A549 (cell line): ENCODE measurements at regions of chr1 and their contacts with region 1.

Region 1: GRCh38 chr1:234722904-234723720 is 113.1 kb upstream of the IRF2BP2 start:
- DNase-seq: peak; percentile 43 to 65
- ATAC-seq: peak; percentile 21 to 24
- H3K4me3 ChIP-seq: peak overlapping the region; percentile 20; the same call in 1 of the 3 replicates
- H3K27ac ChIP-seq: peak overlapping the region; percentile 86 to 87
- H3K4me1 ChIP-seq: peaks cover 62% of the 10 kb centered on the region
- CTCF ChIP-seq: no peak
- EP300 ChIP-seq: no peak; a peak in 1 of 5 replicates
- POLR2A ChIP-seq: no peak
- RAD21 ChIP-seq: no peak; a peak in 1 of 5 replicates

Region 2: GRCh38 chr1:234386122-234386521 is 337.0 kb before region 1 on chr1:
- CTCF ChIA-PET with region 1: no interaction called
- POLR2A ChIA-PET with region 1: no interaction called
- DNase-seq: no peak
- ATAC-seq: no peak
- H3K4me3 ChIP-seq: no peak overlapping the region
- H3K27ac ChIP-seq: no peak overlapping the region
- H3K4me1 ChIP-seq: no peaks in the 10 kb centered on the region
- CTCF ChIP-seq: no peak
- EP300 ChIP-seq: no peak
- POLR2A ChIP-seq: no peak
- RAD21 ChIP-seq: no peak

Region 3: DNA sequence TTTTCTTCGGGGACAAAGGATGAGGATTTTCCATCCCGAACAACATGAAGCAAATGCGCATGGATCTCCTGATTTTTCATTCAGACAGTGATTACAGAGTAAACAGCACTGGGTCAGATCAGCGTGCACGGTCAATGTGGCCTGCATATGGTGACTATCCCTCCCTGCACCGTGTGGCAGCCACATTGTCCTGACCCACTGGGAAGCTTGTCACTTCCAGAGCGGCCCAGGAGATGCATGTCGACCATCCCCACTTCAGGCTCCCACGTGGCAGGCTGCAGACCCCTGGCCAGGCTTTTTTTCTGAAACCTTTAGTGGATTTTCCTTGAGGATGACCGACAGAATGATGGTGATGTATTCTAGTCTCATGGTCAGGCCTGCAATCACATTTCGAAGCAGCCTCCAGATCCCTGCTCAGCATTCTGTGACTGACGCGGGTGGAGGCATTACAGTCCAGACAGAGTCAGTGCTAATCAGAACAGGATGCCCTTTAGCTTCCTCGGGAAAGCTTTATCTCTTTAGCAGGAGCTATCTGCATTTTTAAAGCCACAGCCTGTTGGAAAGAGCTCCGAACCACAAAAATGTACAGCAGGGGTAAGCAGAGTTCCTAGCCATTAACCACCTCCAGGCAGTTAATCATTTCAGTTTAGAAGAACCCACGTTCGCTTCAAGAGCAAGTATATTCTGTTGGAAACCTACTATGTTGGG is 169.8 kb before region 1 on chr1:
- CTCF ChIA-PET with region 1: no interaction called
- POLR2A ChIA-PET with region 1: no interaction called
- DNase-seq: no peak
- ATAC-seq: 0 out of 6 replicates have a peak, but pooled peaks of 1 of the 2 experiments have one; percentile 34
- H3K4me3 ChIP-seq: no peak overlapping the region
- H3K27ac ChIP-seq: peak overlapping the region in 1 of 2 experiments; percentile 22; a peak in 1 of 6 replicates
- H3K4me1 ChIP-seq: no peaks in the 10 kb centered on the region
- CTCF ChIP-seq: no peak
- EP300 ChIP-seq: no peak
- POLR2A ChIP-seq: no peak
- RAD21 ChIP-seq: no peak

Region 4: GRCh38 chr1:234631721-234632125 is 91.4 kb before region 1 on chr1:
- CTCF ChIA-PET with region 1: interaction called, 4 read pairs
- POLR2A ChIA-PET with region 1: interaction called, 13 read pairs
- DNase-seq: peak; percentile 53 to 76
- ATAC-seq: peak; percentile 55 to 78
- H3K4me3 ChIP-seq: no peak overlapping the region
- H3K27ac ChIP-seq: peak overlapping the region; percentile 70 to 72
- H3K4me1 ChIP-seq: peaks cover 44% of the 10 kb centered on the region
- CTCF ChIP-seq: no peak
- EP300 ChIP-seq: peak in 1 of 2 experiments; percentile 42; a peak in 2 of 5 replicates
- POLR2A ChIP-seq: no peak
- RAD21 ChIP-seq: 0 out of 5 replicates have a peak, but pooled peaks of 1 of the 2 experiments have one; percentile 19

Region 5: GRCh38 chr1:234772345-234773147 is 49.4 kb after region 1 on chr1:
- CTCF ChIA-PET with region 1: interaction called, 4 read pairs
- POLR2A ChIA-PET with region 1: interaction called, 18 read pairs
- DNase-seq: peak; percentile 97 to 98
- ATAC-seq: peak; percentile 95 to 99
- H3K4me3 ChIP-seq: no peak overlapping the region
- H3K27ac ChIP-seq: peak overlapping the region; percentile 82 to 95
- H3K4me1 ChIP-seq: peaks cover 18% of the 10 kb centered on the region
- CTCF ChIP-seq: no peak
- EP300 ChIP-seq: peak; percentile 86 to 88; a peak in 4 of 5 replicates
- POLR2A ChIP-seq: no peak
- RAD21 ChIP-seq: peak; percentile 36 to 79

Region 6: GRCh38 chr1:234955107-234955731 is 232.1 kb after region 1 on chr1:
- CTCF ChIA-PET with region 1: interaction called, 3 read pairs
- POLR2A ChIA-PET with region 1: interaction called, 20 read pairs
- DNase-seq: no peak
- ATAC-seq: no peak
- H3K4me3 ChIP-seq: no peak overlapping the region
- H3K27ac ChIP-seq: peak overlapping the region; percentile 93 to 96
- H3K4me1 ChIP-seq: peaks cover 58% of the 10 kb centered on the region
- CTCF ChIP-seq: no peak
- EP300 ChIP-seq: no peak
- POLR2A ChIP-seq: no peak
- RAD21 ChIP-seq: no peak

Region 7: GRCh38 chr1:235067263-235068172 is 344.4 kb after region 1 on chr1:
- CTCF ChIA-PET with region 1: no interaction called
- POLR2A ChIA-PET with region 1: interaction called, 17 read pairs
- DNase-seq: peak; percentile 92 to 99
- ATAC-seq: peak; percentile 90
- H3K4me3 ChIP-seq: 0 out of 3 replicates have a peak overlapping the region, but pooled peaks have one; percentile 14
- H3K27ac ChIP-seq: peak overlapping the region; percentile 97 to 98
- H3K4me1 ChIP-seq: peaks cover 66% of the 10 kb centered on the region
- CTCF ChIP-seq: no peak
- EP300 ChIP-seq: peak; percentile 77 to 79; a peak in 3 of 5 replicates
- POLR2A ChIP-seq: no peak
- RAD21 ChIP-seq: peak in 1 of 2 experiments; percentile 66; a peak in 4 of 5 replicates

Region 8: DNA sequence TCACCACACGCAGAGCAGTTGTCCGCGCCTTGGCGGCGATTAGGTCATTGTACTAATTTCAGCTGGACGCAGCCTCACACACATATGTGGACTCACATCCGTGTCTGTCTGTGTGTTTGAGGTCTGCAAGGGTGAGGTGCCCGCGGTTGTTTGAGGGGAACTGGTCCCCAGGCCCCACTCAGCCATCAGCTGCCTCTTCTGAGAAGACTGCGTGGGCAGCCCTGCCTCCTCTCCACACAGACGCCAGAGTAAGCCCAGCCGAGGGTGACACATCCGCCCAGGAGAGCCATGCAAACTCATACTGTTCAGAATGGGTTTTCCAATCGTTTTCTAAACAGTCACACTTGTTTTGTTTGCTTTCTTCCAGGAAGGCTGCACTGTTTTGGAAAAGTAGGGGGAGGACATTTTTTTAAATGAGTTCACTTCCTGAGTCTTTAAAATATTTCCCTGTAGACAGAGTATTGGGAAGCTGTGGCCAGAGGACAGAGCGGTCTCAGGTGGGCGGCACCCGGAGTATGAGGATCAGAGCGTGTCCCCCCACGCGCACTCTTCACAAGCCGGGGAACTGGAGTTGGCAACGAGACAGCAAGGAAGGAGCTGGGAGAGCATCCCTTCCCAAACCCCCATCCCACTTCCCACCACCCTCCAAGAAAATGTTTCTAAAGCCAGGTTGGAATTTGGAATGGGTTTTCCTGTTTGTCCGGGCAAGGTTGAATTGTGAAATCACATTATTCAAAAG is 352.2 kb after region 1 on chr1:
- CTCF ChIA-PET with region 1: no interaction called
- POLR2A ChIA-PET with region 1: interaction called, 10 read pairs
- DNase-seq: peak; percentile 74 to 90
- ATAC-seq: peak; percentile 55 to 73
- H3K4me3 ChIP-seq: 0 out of 3 replicates have a peak overlapping the region, but pooled peaks have one; percentile 14
- H3K27ac ChIP-seq: peak overlapping the region; percentile 97 to 98
- H3K4me1 ChIP-seq: peaks cover 92% of the 10 kb centered on the region
- CTCF ChIP-seq: no peak
- EP300 ChIP-seq: peak; percentile 63 to 76; a peak in 4 of 5 replicates
- POLR2A ChIP-seq: no peak
- RAD21 ChIP-seq: peak; percentile 8 to 12; a peak in 1 of 5 replicates